Panc1 (cell line): ENCODE measurements at regions of chr10 and their contacts with region 1.

Region 1: GRCh38 chr10:79148452-79149344 is 79.9 kb downstream of the ZMIZ1 start:
- DNase-seq: no peak
- ATAC-seq: 0 out of 2 replicates have a peak, but pooled peaks have one; percentile 2
- H3K4me3 ChIP-seq: no peak overlapping the region
- H3K27ac ChIP-seq: peak overlapping the region; percentile 52
- H3K4me1 ChIP-seq: peaks cover 38% of the 10 kb centered on the region
- H3K27me3 ChIP-seq: no peaks in the 10 kb centered on the region
- CTCF ChIP-seq: no peak

Region 2: GRCh38 chr10:77692782-77693181 is 1455.9 kb before region 1 on chr10:
- CTCF ChIA-PET with region 1: no interaction called
- POLR2A ChIA-PET with region 1: interaction called, 13 read pairs
- in situ Hi-C with region 1: no loop called
- intact Hi-C with region 1: no loop called
- DNase-seq: no peak
- ATAC-seq: no peak
- H3K4me3 ChIP-seq: no peak overlapping the region
- H3K27ac ChIP-seq: no peak overlapping the region
- H3K4me1 ChIP-seq: no peaks in the 10 kb centered on the region
- H3K27me3 ChIP-seq: peaks cover 16% of the 10 kb centered on the region
- CTCF ChIP-seq: no peak

Region 3: DNA sequence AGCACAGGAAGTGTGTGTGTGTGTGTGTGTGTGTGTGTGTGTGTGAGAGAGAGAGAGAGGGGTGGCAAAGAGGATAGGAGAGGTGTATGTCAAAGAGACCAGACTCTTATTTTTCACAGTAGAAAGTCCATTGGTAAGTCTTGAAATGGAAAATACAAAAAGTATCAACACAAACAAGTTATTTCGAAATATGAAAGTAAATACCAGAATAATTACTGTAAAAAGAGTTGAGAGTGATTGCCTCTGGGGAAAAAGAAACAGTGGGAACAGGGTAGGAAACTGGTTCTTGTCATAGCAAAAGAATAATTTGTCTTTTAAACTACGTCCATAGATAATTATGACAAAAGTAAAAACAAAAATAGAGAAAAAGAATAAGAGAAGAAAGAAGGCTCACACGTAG is 334.6 kb after region 1 on chr10:
- CTCF ChIA-PET with region 1: no interaction called
- POLR2A ChIA-PET with region 1: no interaction called
- in situ Hi-C with region 1: no loop called
- intact Hi-C with region 1: no loop called
- DNase-seq: no peak
- ATAC-seq: no peak
- H3K4me3 ChIP-seq: no peak overlapping the region
- H3K27ac ChIP-seq: no peak overlapping the region
- H3K4me1 ChIP-seq: no peaks in the 10 kb centered on the region
- H3K27me3 ChIP-seq: 0 out of 2 replicates have a peak, but pooled peaks cover 2% of the 10 kb centered on the region
- CTCF ChIP-seq: no peak